Cardiac septum (tissue), 1 donor: ENCODE measurements at regions of chr3 and their contacts with region 1.

Region 1: DNA sequence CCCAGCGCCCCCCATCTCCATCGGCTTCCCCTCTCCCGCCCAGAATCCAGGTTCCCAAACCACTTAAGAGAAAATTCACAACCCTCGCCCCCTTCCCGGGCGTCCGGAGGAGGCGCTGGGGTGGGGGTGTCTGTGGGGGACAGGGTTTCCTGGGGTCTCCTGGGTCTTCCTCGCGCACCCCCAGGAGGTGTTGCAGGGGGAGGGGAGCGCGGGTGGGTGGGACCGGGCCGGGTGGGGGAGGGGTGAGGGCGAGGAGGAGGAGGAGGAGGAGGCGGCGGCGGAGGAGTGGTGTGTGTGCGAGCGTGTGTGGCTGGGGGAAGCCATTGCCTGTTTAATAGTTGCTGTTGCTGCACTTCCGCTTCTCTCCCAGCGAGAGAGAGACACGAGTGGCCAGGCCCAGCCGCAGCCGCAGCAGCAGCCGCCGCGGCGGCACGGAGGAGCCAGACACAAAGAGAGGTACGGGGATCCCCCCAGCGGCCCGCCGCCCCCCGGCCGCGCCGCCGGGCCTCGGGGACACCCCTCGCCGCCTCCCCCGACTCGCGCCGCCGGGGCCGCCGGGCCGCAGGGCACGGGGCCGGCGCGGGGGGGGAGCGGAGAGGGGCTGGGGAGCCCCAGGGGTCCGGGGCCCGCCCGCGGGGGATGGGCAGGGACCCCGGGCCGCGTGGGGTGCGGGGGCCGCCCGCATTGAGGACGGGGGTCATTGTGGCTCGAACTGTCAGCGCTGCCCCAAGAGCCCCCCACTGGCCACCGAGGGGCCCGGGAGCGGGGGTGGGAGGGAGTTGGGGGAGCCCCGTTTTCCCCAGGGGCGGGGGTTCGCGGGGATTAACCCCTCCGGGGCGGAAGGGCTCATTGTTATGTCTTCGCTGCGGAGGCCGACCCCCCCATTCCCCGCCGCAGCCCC is at the start of gene UBE2E1:
- DNase-seq: peak; percentile 89
- total RNA-seq, gene UBE2E1: 59.7 TPM

Region 2: GRCh38 chr3:23740517-23740965 is 65.3 kb before region 1 on chr3:
- intact Hi-C with region 1: loop called (anchors 5 kb)
- DNase-seq: no peak

Region 3: GRCh38 chr3:23865595-23866450 is 59.9 kb after region 1 on chr3:
- intact Hi-C with region 1: no loop called
- DNase-seq: no peak

Region 4: GRCh38 chr3:23916886-23917678 is 111.2 kb after region 1 on chr3 and contains the starts of genes NKIRAS1 and RPL15:
- intact Hi-C with region 1: loop called (anchors 5 kb)
- DNase-seq: peak; percentile 99
- total RNA-seq, gene NKIRAS1: 17.2 TPM
- total RNA-seq, gene RPL15: 798 TPM